AG04450 (cell line): ENCODE measurements at regions of chr18 and their contacts with region 1.

Region 1: DNA sequence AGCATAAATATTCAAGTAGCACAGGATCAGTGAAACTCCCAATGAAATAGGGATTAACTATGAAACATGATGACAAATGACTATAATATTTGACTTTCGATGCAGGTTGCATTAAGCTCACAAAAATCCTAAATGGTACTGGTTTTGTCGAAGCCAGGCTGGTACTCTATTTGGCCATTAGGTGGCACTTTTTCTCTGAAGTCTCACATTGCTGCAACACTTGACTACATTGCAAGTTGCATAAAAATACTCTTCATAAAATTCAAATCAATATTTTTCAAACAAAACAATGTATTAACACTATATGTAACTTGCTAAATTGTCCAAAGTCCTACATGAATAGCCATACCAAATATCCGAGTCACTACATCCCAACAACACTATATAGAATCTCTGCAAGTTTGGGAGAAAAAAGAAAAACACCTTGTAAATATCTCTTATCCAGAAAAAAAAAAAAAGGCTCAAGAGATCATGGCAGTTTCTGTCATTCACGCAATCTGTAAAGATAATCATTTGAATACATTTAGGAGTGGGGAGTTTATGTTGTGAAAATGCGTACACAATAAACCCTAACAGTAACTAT is 9.5 kb downstream of the RTTN start:
- DNase-seq: no peak
- H3K4me3 ChIP-seq: no peak overlapping the region
- H3K27ac ChIP-seq: no peak overlapping the region
- H3K27me3 ChIP-seq: no peaks in the 10 kb centered on the region
- CTCF ChIP-seq: peak; percentile 86

Region 2: GRCh38 chr18:69978732-69979715 is 216.9 kb before region 1 on chr18:
- CTCF ChIA-PET with region 1: no interaction called
- POLR2A ChIA-PET with region 1: no interaction called
- DNase-seq: no peak
- H3K4me3 ChIP-seq: no peak overlapping the region
- H3K27ac ChIP-seq: no peak overlapping the region
- H3K27me3 ChIP-seq: no peaks in the 10 kb centered on the region
- CTCF ChIP-seq: no peak

Region 3: GRCh38 chr18:70172225-70172624 is 23.7 kb before region 1 on chr18:
- CTCF ChIA-PET with region 1: interaction called, 21 read pairs
- POLR2A ChIA-PET with region 1: no interaction called
- DNase-seq: no peak
- H3K4me3 ChIP-seq: no peak overlapping the region
- H3K27ac ChIP-seq: no peak overlapping the region
- H3K27me3 ChIP-seq: no peaks in the 10 kb centered on the region
- CTCF ChIP-seq: peak; percentile 63

Region 4: DNA sequence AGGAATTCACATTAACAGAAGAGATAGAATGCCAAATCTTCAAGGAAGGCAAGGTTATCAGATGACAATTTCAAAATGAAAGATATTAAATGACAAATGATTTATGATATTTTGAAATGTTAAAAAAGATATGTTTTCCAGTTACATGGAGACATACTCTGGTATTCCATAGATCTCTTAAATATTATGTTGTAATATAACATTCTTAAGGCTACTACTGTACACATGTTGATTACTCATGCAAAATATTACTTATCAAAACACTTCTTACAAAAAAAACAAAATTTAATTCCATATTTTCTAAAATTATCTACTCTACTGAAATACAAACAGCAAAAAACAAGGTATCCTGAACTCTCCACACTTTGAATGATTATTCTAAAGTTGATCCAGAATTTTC is 13.4 kb before region 1 on chr18:
- CTCF ChIA-PET with region 1: interaction called, 47 read pairs
- POLR2A ChIA-PET with region 1: no interaction called
- DNase-seq: no peak
- H3K4me3 ChIP-seq: no peak overlapping the region
- H3K27ac ChIP-seq: no peak overlapping the region
- H3K27me3 ChIP-seq: no peaks in the 10 kb centered on the region
- CTCF ChIP-seq: no peak

Region 5: DNA sequence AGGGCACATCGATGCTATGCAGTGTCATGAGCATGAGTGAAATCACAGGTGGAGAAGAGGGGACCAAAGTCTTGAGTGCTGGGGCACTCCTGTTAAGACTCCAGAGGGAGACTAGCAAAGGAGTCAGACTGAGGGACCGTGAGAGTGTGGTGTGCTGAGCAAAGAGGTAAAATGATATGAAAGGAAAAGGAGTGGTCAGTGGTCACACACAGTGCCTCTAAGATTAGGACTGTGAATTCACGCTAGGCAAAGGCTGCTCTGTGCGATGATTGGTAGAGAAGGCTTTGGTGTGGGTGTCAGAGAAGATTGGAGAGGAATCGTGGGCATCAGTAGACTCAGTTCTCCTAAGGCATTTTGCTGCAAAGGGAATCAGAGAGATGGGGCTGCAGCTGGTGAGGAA is 105.7 kb after region 1 on chr18:
- CTCF ChIA-PET with region 1: no interaction called
- POLR2A ChIA-PET with region 1: no interaction called
- DNase-seq: no peak
- H3K4me3 ChIP-seq: no peak overlapping the region
- H3K27ac ChIP-seq: no peak overlapping the region
- H3K27me3 ChIP-seq: no peaks in the 10 kb centered on the region
- CTCF ChIP-seq: no peak

Region 6: GRCh38 chr18:70373042-70373519 is 177.1 kb after region 1 on chr18:
- CTCF ChIA-PET with region 1: no interaction called
- POLR2A ChIA-PET with region 1: no interaction called
- DNase-seq: peak; percentile 43
- H3K4me3 ChIP-seq: peak overlapping the region; percentile 23; the same call in 1 of the 2 replicates
- H3K27ac ChIP-seq: peak overlapping the region; percentile 49
- H3K27me3 ChIP-seq: no peaks in the 10 kb centered on the region
- CTCF ChIP-seq: no peak

Region 7: DNA sequence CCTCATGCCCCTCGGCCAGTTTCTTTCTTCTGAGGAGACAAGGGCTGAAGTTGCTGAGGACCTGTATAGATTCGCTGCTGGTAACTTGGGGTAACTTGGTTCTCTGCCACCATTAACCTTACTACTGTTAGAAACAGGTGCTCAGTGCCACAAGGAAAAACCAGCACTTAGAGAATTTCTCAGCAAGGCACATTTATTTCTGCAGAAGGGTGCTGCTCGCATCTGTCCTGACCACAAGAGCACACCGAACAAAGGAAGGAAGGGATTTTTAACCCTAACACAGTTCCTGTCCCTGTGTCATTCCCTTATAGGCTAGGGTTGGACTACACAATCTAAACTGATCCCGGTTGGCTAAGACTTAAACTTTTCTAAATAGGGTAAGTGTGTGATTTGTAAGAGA is 247.0 kb after region 1 on chr18:
- CTCF ChIA-PET with region 1: interaction called, 296 read pairs
- POLR2A ChIA-PET with region 1: no interaction called
- DNase-seq: no peak
- H3K4me3 ChIP-seq: no peak overlapping the region
- H3K27ac ChIP-seq: no peak overlapping the region
- H3K27me3 ChIP-seq: no peaks in the 10 kb centered on the region
- CTCF ChIP-seq: no peak

Region 8: DNA sequence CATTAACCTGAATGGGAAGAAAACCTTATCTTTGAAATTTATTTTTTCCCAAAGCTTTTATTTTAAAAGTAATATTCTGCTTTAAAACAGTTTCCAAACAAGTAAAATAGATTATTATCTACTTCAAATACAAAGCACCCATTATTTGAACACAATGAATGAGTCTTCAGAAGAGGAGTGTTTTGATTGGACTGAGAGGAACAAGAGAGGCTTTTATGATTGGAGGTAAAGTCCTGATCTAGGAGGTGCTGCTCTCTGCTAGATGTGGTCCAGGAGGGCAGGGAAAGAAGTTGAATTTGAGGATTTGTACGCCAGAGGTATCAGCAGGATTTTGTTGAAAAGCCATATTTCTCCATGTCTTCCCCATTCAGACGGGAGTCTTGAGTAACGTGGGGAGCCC is 993.6 kb after region 1 on chr18:
- CTCF ChIA-PET with region 1: no interaction called
- POLR2A ChIA-PET with region 1: no interaction called
- DNase-seq: no peak
- H3K4me3 ChIP-seq: no peak overlapping the region
- H3K27ac ChIP-seq: no peak overlapping the region
- H3K27me3 ChIP-seq: no peaks in the 10 kb centered on the region
- CTCF ChIP-seq: no peak